ENCODE measurements at regions of chr1 and their contacts with region 1.

Region 1: DNA sequence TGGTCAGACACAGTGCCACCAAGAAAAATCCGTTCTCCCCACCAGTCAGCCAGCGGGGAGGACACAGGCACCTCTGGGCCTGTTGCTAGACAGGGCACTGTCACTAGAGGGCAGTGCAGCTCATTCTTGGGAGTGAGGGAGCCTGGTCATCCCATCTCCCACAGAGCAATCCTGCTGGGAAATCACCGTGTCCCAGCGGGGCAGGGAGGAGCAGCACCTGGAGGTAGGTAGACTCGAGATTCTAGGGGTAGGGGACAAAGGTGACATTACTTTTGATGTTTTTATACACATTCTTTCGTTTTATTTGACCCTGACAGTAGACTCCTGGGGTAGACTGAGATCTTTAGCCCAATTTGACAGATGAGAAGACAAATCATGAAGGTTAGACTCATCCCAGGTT is 6.7 kb upstream of the CAMK1G start:
- DNase-seq: peak; percentile 76
- H3K4me3 ChIP-seq: no peak overlapping the region
- H3K27ac ChIP-seq: no peak overlapping the region
- H3K4me1 ChIP-seq: peaks cover 9% of the 10 kb centered on the region
- H3K27me3 ChIP-seq: no peaks in the 10 kb centered on the region
- CTCF ChIP-seq: peak; percentile 98

Region 2: DNA sequence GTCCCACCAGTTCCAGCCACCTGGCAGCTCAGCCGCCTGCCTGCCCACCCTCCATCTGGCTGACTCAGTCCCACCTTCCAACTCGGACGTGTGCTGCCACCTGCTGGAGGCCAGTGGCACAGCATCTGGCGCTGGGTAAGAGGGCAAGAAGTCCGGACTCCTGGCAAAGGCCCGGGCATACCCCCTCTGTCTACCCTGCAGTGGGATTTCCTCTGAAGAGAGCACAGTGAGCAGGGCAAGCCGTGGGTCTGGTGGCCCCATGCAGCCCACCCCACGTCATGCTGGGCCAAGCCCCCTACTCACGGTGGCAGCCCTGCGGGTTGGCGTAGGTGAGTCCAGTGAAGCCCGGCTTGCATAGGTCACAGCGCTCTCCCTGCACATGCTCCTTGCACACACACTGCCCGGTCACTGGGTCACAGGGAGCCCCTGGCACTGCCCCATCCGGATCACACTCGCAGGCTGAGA is 51.0 kb after region 1 on chr1:
- CTCF ChIA-PET with region 1: no interaction called
- dilution Hi-C with region 1: no loop called
- in situ Hi-C with region 1: no loop called
- intact Hi-C with region 1: loop called (anchors 1 kb)
- DNase-seq: no peak
- H3K4me3 ChIP-seq: no peak overlapping the region
- H3K27ac ChIP-seq: no peak overlapping the region
- H3K4me1 ChIP-seq: peaks cover 4% of the 10 kb centered on the region
- H3K27me3 ChIP-seq: no peaks in the 10 kb centered on the region
- CTCF ChIP-seq: peak; percentile 86 to 90

Region 3: GRCh38 chr1:209747580-209748262 is 170.9 kb after region 1 on chr1:
- CTCF ChIA-PET with region 1: no interaction called
- dilution Hi-C with region 1: no loop called
- in situ Hi-C with region 1: loop called in 1 of 2 experiments (anchors 10 kb)
- intact Hi-C with region 1: loop called (anchors 1 kb)
- DNase-seq: peak; percentile 97
- H3K4me3 ChIP-seq: no peak overlapping the region
- H3K27ac ChIP-seq: no peak overlapping the region
- H3K4me1 ChIP-seq: peaks cover 7% of the 10 kb centered on the region
- H3K27me3 ChIP-seq: no peaks in the 10 kb centered on the region
- CTCF ChIP-seq: peak; percentile 69 to 74

Measured in mammary epithelial cell (primary cell).